HepG2 (cell line): ENCODE measurements at regions of chr4 and their contacts with region 1.

Region 1: DNA sequence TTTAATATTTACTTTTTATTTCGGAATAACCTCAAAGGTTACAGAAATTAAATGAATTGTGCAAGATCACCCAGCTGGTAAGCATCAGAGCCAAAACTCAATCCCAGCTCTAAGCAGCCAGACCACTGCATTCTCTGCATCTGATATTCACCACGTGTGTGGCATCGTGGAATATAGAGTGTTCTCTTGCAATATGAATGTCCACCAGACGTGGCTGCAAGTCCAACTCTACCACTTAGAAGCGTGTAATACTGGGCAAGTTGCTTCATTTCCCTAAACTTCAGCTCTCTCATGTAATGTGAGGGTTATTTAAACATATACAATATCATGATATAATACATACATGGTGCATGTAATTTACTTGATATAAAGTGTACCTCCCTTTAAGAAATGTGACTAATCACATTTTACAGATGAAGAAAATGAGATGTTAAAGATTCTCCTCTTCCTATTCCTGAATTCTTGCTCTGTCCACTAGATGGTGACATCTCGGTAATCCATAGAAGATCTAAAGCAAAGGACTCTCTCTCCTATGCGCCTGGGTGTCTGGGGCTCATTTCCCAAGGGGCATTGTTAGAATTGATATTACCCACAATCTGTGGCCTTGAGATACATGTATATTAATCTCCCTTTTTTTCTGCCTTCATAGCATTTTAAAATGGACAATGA is 805.1 kb downstream of the RAB28 start:
- DNase-seq: peak; percentile 2
- ATAC-seq: peak; percentile 78
- H3K4me3 ChIP-seq: no peak overlapping the region
- H3K27ac ChIP-seq: no peak overlapping the region
- H3K4me1 ChIP-seq: no peaks in the 10 kb centered on the region
- H3K27me3 ChIP-seq: no peaks in the 10 kb centered on the region
- CTCF ChIP-seq: peak; percentile 45
- EP300 ChIP-seq: no peak
- POLR2A ChIP-seq: no peak
- RAD21 ChIP-seq: no peak

Region 2: GRCh38 chr4:12729384-12729783 is 50.3 kb after region 1 on chr4:
- CTCF ChIA-PET with region 1: interaction called, 4 read pairs
- POLR2A ChIA-PET with region 1: no interaction called
- in situ Hi-C with region 1: no loop called
- intact Hi-C with region 1: loop called (anchors 2 kb)
- DNase-seq: peak; percentile 11
- ATAC-seq: no peak
- H3K4me3 ChIP-seq: no peak overlapping the region
- H3K27ac ChIP-seq: no peak overlapping the region
- H3K4me1 ChIP-seq: no peaks in the 10 kb centered on the region
- H3K27me3 ChIP-seq: no peaks in the 10 kb centered on the region; a peak in 2 of 5 replicates
- CTCF ChIP-seq: peak; percentile 44
- EP300 ChIP-seq: no peak
- POLR2A ChIP-seq: no peak
- RAD21 ChIP-seq: no peak